Breast epithelium (tissue), 4 donors: ENCODE measurements at regions of chr5 and their contacts with region 1.

Region 1: DNA sequence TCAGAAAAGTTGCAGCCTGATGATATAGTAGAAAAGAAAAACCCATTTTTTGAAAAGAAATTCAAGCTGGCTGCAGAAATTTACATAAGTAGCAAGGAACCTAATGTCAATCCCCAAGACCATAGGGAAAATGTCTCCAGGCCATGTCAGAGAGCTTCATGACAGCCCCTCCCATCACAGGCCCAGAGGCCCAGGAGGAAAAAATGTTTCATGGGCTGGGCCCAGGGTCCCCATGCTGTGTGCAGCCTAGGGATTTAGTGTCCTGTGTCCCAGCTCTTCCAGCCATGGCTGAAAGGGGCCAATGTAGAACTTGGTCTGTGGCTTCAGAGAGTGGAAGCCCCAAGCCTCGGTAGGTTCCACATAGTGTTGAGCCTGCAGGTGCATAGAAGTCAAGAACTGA is 220.3 kb downstream of the CSNK1G3 start:
- DNase-seq: no peak
- H3K4me3 ChIP-seq: no peak overlapping the region
- H3K27ac ChIP-seq: no peak overlapping the region
- H3K4me1 ChIP-seq: no peaks in the 10 kb centered on the region
- H3K27me3 ChIP-seq: no peaks in the 10 kb centered on the region
- CTCF ChIP-seq: no peak
- POLR2A ChIP-seq: no peak

Region 2: DNA sequence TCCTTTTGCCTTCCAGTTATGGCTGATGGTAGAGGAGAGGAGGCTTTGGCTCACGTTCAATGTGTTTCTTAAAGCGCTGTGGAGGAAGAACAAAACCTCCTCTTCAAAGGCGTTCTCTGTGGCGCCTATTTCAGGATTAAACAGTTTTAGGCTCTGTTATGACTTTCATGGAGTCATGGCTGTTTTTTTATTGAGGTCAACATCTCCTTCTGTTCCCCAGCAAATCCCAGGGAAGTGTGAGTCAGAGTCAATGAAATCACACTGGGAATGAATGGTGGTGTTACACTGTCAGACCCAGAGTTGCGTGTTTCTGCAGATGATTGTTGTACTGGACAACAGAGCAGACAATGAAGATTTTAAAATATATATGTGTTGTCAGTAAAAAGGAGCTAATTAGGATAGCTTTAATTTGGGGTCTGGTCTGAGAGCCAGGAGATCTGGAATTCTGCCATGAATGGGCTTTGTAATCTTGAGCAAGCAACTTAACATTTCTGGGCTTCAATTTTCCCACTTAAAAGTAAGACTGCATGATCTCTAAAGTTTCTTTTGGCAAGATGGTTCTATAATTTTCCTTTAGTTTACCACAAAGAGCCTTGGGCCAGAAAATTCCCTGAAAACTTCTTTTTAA is 20.4 kb after region 1 on chr5:
- intact Hi-C with region 1: no loop called
- DNase-seq: no peak
- H3K4me3 ChIP-seq: no peak overlapping the region
- H3K27ac ChIP-seq: no peak overlapping the region
- H3K4me1 ChIP-seq: no peaks in the 10 kb centered on the region
- H3K27me3 ChIP-seq: no peaks in the 10 kb centered on the region
- CTCF ChIP-seq: no peak
- POLR2A ChIP-seq: no peak

Region 3: DNA sequence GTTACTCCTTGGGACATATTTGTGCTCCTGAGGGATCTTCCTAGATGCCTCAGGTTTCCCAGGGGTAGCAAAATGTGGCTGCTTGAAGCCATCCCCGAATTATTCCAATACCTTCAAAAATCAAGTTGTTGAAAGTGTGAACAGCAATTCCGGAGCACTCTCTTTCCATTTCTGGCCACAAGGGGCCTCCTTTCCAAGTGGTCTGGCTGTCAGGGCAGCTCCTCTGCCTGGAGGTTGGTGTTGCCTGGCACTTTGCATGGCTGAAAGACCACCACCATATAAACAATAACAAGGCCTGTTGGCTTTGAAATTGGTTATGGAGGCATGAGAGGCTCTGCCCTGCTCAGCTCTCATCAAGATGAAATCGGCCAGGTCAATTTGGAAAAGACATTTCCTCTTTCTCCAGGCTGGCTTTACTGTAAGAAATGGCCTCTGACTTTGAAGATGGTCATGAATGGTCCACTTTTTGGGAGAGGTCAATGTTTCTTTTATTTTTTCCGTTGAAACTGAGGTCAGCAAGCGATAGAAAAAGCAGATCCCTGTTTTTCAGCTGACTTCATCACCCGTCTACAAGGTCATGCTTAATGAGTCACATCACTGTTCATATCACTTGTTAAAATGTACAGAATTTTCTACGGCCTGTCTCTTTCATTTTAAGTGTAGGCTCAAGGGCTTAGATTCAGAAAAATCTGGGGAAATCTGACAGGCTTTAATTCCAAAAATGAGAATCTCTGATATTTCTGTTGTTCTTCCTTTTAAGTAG is 1495.3 kb after region 1 on chr5:
- intact Hi-C with region 1: loop called (anchors 2 kb)
- DNase-seq: no peak
- H3K4me3 ChIP-seq: no peak overlapping the region
- H3K27ac ChIP-seq: no peak overlapping the region
- H3K4me1 ChIP-seq: no peaks in the 10 kb centered on the region
- H3K27me3 ChIP-seq: no peaks in the 10 kb centered on the region
- CTCF ChIP-seq: no peak
- POLR2A ChIP-seq: no peak